ENCODE measurements at regions of chr1 and their contacts with region 1.

Region 1: DNA sequence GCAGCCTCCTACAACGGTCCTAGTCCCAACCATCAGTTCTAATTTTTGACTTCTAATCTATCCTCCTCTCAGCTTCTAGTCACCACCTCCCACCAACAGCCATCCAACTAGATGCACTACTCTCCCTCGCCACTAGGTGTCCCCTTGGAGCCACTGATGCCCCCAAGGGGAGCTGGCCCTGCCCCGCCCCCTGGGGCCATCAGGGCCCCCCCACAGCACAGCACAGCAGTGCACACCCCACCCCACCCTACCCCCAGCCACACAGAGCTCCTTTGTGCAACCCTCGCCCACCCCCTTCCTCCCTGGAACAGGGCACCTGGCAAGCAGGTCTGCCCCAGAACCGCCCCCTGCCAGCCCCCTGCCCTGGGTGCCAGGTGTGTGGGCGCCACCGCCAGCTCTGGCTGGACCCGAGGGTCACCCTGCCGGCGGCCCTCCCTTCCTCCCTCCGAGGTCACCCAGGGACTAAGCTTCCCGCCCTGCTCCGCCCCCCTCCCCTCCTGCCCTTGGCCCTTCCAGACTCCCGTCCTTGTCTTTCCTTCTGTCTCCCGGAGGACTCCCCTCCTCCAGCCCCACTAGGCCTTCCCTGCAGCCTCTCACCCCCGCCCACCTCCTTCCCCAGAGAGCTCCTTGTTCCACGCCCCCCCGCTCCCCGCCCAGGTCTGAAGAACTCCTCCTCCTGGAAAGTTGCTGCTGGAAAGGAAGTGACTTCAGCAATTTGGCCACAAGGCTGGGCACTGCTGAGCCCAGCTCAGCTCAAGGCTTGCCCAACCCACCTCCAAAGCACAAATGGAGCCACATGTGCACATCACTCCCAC is 47.0 kb downstream of the AHDC1 start:
- DNase-seq: peak; percentile 94
- H3K4me3 ChIP-seq: no peak overlapping the region
- H3K27ac ChIP-seq: peak overlapping the region; percentile 56
- H3K4me1 ChIP-seq: peaks cover 48% of the 10 kb centered on the region
- H3K27me3 ChIP-seq: no peaks in the 10 kb centered on the region
- CTCF ChIP-seq: peak; percentile 67 to 89

Region 2: DNA sequence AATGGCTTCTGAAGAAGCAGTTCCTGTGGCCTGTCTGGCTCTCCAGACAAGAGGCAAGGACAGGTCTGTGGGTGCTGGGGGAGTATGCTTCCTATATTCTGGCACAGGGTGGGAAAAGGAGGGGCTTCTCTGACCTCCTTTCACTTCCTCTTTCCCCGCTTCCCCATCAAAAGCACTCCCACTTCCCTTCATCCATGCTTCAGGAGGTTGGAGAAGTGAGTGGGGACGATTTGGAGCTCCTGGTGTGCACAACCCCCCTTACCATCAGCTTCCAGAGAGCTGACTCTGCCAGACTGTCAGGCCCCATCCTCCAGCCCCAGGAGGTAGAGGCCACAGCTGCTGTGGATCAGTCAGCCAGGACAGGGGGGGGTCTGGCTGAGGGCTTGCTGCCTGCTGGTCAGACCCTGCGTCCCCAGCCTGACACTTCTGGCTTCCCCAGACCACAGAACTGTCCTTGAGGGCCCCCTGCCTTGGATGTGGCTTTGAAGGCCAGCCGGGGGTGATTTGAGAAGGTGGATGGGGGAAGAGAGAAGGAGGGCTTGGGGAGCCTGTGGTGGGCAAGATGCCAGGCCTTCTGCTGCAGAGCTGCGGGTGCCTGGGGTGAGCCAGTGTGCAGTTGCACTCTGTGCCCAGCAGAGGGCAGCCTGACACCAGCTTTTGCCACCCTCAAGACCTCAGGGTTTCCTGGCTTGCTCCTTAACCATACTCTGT is 256.5 kb before region 1 on chr1:
- CTCF ChIA-PET with region 1: no interaction called
- dilution Hi-C with region 1: no loop called
- in situ Hi-C with region 1: no loop called
- intact Hi-C with region 1: loop called (anchors 2 kb)
- DNase-seq: peak; percentile 73
- H3K4me3 ChIP-seq: no peak overlapping the region
- H3K27ac ChIP-seq: peak overlapping the region; percentile 86
- H3K4me1 ChIP-seq: peaks cover 28% of the 10 kb centered on the region
- H3K27me3 ChIP-seq: no peaks in the 10 kb centered on the region
- CTCF ChIP-seq: peak; percentile 96 to 98

Region 3: DNA sequence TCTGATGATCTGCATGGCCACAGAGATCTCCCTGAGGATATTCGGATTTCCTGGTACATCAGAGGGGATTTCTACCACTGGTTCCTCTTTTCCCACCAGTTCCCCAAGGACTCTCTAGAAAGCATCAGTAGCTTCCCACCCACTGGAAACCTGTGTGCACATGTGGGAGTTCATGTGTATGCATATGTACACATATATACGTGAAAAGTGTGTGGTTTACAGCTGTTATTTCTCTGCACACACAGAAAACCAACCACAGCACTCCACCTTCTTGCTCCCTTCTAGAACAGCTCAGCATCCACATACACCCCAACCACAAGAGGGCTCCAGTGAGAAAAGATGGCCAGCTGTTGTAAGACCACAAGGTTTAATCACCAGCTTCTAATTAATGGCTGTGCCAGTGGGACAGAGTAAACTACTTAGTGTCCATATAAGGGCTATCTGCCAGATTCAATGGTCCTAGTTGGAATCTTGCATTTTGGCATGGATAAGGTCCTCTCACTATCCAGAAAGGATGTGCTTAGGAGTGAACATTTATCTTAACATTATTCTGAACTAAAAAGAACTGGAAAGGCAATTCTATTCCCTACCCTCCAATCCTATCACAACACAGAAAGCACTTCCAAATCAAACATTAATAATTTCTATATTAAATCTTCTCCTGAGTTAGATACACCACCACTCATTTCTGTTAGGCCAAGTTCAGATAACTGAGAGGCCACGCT is 140.4 kb before region 1 on chr1:
- CTCF ChIA-PET with region 1: no interaction called
- dilution Hi-C with region 1: no loop called
- in situ Hi-C with region 1: no loop called
- intact Hi-C with region 1: loop called (anchors 1 kb)
- DNase-seq: peak; percentile 64
- H3K4me3 ChIP-seq: no peak overlapping the region
- H3K27ac ChIP-seq: no peak overlapping the region
- H3K4me1 ChIP-seq: peaks cover 38% of the 10 kb centered on the region
- H3K27me3 ChIP-seq: no peaks in the 10 kb centered on the region
- CTCF ChIP-seq: peak; percentile 75 to 83

Region 4: DNA sequence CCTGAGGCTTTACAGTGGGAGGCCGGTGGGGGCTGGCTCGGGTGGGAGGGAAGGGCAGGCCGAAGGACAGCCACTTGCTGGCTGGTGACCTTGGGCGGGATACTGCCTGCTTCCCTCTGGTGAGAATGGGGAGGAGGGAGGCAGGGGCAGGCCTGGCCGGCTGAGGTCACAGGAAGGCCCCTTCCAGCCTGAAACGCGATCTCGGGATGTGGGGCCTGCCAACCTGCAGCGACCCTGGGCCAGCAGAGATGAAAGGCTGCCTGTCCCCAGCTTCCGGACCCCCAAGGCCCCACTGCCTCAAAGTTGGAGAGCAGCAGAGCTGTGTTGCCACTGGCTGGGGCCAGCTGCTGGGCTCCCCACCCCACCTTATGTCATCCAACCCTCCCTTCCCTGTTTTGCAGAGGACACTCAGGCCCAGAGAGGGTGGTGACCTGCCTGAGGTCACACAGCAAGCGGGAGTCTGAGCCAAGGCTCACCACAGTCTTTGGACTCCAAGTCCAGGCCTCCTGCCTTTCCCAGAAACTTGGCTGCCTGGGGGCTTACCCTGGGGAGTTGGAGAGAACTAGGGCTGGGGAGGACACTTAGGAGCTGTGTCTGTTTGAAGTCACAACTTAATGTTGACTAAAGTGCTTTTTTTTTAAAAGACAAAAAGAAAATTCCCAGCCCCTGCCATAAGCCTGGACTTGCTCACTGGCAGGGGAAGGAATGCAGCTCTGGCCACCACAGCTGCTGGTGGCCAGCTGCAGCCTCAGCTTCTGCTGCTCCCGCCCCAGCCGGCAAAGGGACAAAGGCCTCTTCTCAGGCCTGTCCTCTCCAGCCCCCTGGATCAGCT is 52.2 kb before region 1 on chr1:
- CTCF ChIA-PET with region 1: interaction called, 21 read pairs
- dilution Hi-C with region 1: no loop called
- in situ Hi-C with region 1: no loop called
- intact Hi-C with region 1: no loop called
- DNase-seq: peak; percentile 76
- H3K4me3 ChIP-seq: no peak overlapping the region
- H3K27ac ChIP-seq: peak overlapping the region; percentile 81
- H3K4me1 ChIP-seq: peaks cover 28% of the 10 kb centered on the region
- H3K27me3 ChIP-seq: no peaks in the 10 kb centered on the region
- CTCF ChIP-seq: no peak

Region 5: DNA sequence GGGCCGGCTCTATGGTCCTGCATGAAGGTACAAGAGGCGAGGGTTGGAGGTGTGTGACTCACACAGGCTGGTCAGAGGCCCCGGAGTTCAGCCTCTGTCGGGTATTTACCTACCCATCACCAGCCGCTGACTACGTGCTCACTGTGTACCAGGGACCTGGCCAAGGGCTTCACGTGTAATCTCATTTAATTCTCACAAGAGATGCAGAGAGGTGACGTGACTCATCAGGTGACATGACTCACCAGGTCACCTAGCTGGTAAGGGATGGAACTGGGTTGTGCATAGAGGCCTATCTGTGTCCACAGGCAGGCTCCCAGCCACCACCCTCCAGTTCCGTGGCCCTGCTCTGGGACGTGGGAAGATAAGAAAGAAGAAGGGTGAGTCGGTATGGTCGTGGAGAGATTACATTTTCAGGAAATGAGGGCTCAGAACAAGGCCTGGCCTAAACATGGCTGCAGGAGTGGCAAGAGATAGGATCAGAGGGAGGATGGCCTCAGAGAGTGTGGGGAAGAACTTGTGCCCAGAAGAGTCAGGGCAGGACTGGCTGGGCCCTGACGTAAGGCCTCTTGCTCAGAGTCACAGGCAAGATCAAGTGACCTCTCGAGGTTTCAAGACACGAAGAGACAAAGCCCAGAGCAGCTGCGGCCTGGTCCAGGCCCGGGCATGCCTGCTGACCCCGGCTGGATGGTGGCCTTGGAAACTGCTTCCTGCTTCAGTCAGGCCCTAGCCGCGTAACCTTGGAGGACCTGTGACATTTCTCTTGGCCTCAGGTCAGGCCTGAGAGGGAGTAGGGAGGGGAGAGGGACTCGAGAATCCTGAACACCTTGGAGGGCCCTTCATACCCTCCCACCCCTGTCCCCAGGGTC is 14.3 kb before region 1 on chr1:
- CTCF ChIA-PET with region 1: no interaction called
- dilution Hi-C with region 1: no loop called
- in situ Hi-C with region 1: no loop called
- intact Hi-C with region 1: loop called (anchors 1 kb)
- DNase-seq: peak; percentile 99
- H3K4me3 ChIP-seq: no peak overlapping the region
- H3K27ac ChIP-seq: peak overlapping the region; percentile 80
- H3K4me1 ChIP-seq: peaks cover 81% of the 10 kb centered on the region
- H3K27me3 ChIP-seq: no peaks in the 10 kb centered on the region
- CTCF ChIP-seq: no peak

Region 6: GRCh38 chr1:27574871-27575831 is 18.2 kb after region 1 on chr1:
- CTCF ChIA-PET with region 1: interaction called, 16 read pairs
- dilution Hi-C with region 1: no loop called
- in situ Hi-C with region 1: no loop called
- intact Hi-C with region 1: loop called (anchors 1 kb)
- DNase-seq: peak; percentile 68
- H3K4me3 ChIP-seq: peak overlapping the region in 2 of 3 experiments; percentile 10 to 18
- H3K27ac ChIP-seq: peak overlapping the region; percentile 20
- H3K4me1 ChIP-seq: peaks cover 70% of the 10 kb centered on the region
- H3K27me3 ChIP-seq: no peaks in the 10 kb centered on the region
- CTCF ChIP-seq: no peak

Region 7: GRCh38 chr1:27609210-27609555 is 52.2 kb after region 1 on chr1:
- CTCF ChIA-PET with region 1: interaction called, 11 read pairs
- dilution Hi-C with region 1: no loop called
- in situ Hi-C with region 1: loop called in 1 of 2 experiments (anchors 10 kb)
- intact Hi-C with region 1: loop called (anchors 1 kb)
- DNase-seq: no peak
- H3K4me3 ChIP-seq: no peak overlapping the region
- H3K27ac ChIP-seq: no peak overlapping the region
- H3K4me1 ChIP-seq: peaks cover 11% of the 10 kb centered on the region
- H3K27me3 ChIP-seq: no peaks in the 10 kb centered on the region
- CTCF ChIP-seq: no peak